PC-9 (cell line): ENCODE measurements at regions of chr5 and their contacts with region 1.

Region 1: DNA sequence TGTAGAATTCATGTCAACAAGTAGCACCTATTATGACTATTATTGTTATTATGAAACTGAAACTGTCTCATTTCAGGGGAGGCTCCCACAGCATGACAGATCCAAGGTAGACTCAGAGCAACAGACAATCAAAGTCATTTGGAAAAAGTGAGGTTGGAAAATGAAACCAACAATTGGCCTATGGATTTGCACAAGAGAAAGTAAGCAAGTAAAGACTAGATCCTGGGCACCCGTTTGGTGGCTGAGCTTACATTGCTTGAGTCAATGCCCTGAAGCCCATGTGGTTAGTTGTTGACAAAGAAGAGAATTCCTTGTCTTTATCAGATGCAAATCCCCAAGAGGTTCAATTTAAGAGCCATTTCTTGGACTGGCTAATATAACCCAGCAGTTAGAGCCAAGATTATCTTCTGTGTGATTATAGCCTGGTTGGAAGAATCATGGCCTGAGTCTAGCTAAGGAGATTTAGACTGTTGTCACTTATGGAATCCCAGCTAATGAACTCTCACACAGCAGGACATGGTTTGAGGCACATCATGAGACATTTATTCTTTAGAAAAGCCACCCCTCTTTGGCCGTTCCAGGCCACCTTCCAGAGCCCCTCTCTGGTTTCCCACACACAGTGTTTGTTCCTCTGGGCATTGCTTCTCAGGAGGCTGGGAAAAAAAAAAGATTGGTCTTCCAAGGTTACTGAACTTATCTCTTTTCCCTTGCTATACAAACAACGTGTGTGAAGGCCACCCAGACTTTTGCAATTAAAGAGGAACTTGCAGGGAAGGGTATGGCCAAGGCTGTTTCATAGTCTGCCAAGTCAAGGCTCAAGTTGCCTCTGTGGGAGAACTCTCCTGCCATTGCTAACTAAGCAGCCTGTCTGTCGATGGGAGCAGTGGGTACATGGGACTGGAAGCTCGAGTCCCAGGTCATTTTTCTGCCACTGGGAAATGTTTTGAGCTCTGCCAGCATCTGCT is 399.5 kb downstream of the ENC1 start:
- DNase-seq: peak; percentile 50 to 96
- H3K4me3 ChIP-seq: peak overlapping the region; percentile 38; the same call in 1 of the 2 replicates
- H3K27ac ChIP-seq: peak overlapping the region; percentile 100
- H3K4me1 ChIP-seq: peaks cover 60% of the 10 kb centered on the region
- H3K27me3 ChIP-seq: no peaks in the 10 kb centered on the region
- CTCF ChIP-seq: 0 out of 2 replicates have a peak, but pooled peaks have one; percentile 11

Region 2: DNA sequence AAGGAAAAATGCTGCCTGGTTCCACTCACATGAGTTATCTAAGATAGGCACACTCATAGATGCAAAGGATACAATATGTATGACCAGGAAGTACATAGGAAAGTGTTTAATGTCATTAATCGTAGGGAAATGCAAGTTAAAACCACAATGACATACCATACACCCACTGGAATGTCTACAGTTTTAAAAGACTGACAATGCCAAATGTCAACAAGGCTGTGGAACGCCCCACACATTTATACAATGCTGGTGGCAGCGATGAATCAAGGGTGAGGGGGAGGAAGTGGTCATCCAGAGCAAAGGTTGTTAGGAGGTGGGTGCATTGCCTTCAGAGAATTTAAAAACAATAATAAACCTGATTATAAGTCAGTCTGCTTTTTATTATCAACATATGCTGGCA is 177.2 kb before region 1 on chr5:
- CTCF ChIA-PET with region 1: no interaction called
- POLR2A ChIA-PET with region 1: no interaction called
- intact Hi-C with region 1: loop called (anchors 5 kb)
- DNase-seq: peak; percentile 70 to 98
- H3K4me3 ChIP-seq: no peak overlapping the region
- H3K27ac ChIP-seq: peak overlapping the region; percentile 79
- H3K4me1 ChIP-seq: peaks cover 52% of the 10 kb centered on the region
- H3K27me3 ChIP-seq: no peaks in the 10 kb centered on the region
- CTCF ChIP-seq: no peak

Region 3: DNA sequence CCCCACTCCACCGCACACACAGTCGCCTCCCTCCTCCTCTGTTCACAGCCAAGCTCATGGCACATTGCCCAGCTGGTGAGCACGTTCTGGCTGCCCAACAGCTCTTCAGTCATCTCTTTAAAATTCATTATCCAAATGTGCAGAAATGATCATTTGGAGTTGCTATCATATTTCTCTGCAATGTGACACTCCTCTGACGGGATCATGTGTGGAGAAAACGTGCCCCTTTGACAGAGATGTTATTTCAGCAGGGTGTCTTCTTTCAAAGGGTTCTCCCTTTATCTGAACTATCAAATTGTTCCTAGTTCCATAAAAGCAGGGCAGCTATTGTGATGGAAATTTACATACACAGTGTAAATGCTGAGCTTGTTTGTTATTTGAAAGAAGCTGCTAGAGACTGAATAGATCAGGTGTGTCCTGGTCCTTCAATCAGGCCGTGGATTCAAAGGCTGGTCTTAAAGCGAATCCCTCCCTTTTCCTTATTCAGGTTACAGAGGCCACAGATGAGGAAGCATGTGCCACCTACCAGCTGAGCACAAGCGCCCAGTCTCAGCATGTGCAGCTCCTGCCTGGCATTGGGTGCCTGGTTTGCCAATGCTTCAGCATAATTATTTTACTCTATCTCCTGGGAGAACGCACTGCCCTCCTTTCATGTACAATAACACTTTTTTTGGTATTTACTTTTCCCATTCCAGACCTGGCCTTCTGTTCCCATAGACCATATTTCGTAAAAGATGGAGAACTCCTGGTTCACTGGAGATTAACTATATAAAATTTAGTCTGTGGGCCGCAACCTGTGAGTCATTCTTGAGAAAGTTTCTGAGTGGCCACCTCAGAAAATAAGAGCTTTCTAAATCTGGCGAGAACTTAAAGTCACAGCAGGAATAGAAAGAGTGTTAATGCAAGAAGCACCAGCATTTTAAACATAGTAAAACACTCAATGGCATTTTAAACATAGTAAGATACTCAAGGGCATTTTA is 34.2 kb before region 1 on chr5:
- CTCF ChIA-PET with region 1: interaction called, 4 read pairs
- POLR2A ChIA-PET with region 1: no interaction called
- intact Hi-C with region 1: loop called (anchors 2 kb)
- DNase-seq: peak in 1 of 2 experiments; percentile 74
- H3K4me3 ChIP-seq: no peak overlapping the region
- H3K27ac ChIP-seq: no peak overlapping the region
- H3K4me1 ChIP-seq: peaks cover 18% of the 10 kb centered on the region
- H3K27me3 ChIP-seq: no peaks in the 10 kb centered on the region
- CTCF ChIP-seq: no peak

Region 4: GRCh38 chr5:74543156-74543995 is 302.3 kb after region 1 on chr5:
- CTCF ChIA-PET with region 1: interaction called, 4 read pairs
- POLR2A ChIA-PET with region 1: no interaction called
- intact Hi-C with region 1: loop called (anchors 5 kb)
- DNase-seq: peak; percentile 86 to 97
- H3K4me3 ChIP-seq: peak overlapping the region; percentile 31; the same call in 1 of the 2 replicates
- H3K27ac ChIP-seq: peak overlapping the region; percentile 95
- H3K4me1 ChIP-seq: peaks cover 73% of the 10 kb centered on the region
- H3K27me3 ChIP-seq: no peaks in the 10 kb centered on the region
- CTCF ChIP-seq: no peak